ENCODE measurements at regions of chr6 and their contacts with region 1.

Region 1: DNA sequence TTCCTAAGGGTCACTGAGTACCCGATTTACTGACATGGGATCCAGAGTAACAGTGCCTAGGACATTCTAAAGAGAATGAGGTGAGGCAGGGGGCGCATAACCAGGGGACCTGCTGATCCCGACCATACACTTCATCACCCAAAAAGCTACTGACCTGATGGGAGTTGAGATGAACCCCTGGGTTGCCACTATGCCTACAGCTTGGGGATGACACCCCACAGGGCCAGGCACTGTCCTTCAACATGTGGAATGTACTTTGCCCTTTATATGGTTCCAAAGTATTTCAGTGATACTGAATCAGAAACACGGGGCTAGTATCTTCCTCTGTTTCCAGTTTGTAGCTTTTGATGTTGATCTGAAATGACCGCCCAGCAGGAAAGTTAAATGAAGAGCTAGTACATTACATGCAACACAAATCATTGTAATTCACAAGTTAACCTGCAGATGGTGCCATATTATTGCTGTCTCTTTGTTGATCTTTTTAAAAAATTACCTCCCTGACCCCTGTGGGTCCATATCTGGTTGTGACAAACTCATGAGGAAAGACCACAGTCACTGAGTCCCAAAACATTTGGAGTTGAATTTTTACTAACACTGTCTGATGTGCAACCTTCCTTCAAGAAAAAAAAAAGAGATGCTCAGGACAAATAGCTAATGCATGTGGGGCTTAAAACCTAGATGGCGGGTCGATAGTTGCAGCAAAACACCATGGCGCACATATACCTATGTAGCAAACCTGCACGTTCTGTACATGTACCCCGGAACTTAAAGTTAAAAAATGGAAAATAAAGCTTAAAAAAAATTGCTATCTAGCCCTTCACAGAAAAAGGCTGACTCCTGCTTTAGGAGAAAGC is 42.7 kb upstream of the GCNT2 start:
- DNase-seq: peak in 1 of 3 donors; percentile 32
- ATAC-seq: no peak
- H3K4me3 ChIP-seq: no peak overlapping the region
- H3K4me1 ChIP-seq: no peaks in the 10 kb centered on the region
- CTCF ChIP-seq: no peak

Region 2: DNA sequence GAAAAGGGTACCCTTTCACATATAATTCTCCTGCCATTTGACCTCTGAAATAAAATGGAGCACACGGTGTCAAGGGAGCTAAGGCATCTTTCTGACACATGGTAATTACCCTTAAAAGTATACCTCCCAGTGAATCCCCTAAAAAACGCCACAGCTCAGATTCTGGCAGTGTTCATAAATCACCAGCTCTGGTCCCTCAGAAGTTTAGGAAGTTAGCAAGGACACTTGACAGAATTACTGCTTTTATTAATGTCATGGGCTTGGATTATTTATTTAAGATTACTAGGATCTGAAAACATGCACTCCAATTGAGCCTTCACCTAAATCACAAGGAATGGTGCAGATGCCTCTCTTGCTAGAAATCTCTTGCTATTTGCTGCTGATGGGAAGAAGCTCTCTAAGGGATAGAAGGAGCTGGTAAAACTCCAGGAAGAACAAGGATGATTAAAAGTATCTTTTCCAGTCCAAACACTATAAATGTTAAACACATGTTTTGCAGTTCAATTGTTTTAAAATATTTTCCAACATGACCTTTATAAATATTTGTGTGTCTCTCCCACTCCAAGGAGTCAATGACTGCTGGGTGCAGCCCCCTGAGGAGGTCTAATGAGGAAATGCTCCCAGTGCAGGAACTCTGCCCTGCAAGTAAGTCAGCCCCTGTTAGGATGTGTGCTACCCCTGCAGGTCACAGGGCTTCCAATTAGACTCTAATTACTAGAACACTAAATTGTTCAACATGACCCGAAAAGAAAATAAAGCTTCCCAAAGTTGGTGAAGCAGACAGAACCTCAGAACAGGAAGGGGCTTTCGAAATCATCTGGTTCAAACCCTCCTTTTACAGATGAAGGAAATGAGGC is 293.8 kb before region 1 on chr6:
- intact Hi-C with region 1: no loop called
- DNase-seq: no peak
- ATAC-seq: no peak
- H3K4me3 ChIP-seq: no peak overlapping the region
- H3K4me1 ChIP-seq: no peaks in the 10 kb centered on the region
- CTCF ChIP-seq: no peak

Region 3: DNA sequence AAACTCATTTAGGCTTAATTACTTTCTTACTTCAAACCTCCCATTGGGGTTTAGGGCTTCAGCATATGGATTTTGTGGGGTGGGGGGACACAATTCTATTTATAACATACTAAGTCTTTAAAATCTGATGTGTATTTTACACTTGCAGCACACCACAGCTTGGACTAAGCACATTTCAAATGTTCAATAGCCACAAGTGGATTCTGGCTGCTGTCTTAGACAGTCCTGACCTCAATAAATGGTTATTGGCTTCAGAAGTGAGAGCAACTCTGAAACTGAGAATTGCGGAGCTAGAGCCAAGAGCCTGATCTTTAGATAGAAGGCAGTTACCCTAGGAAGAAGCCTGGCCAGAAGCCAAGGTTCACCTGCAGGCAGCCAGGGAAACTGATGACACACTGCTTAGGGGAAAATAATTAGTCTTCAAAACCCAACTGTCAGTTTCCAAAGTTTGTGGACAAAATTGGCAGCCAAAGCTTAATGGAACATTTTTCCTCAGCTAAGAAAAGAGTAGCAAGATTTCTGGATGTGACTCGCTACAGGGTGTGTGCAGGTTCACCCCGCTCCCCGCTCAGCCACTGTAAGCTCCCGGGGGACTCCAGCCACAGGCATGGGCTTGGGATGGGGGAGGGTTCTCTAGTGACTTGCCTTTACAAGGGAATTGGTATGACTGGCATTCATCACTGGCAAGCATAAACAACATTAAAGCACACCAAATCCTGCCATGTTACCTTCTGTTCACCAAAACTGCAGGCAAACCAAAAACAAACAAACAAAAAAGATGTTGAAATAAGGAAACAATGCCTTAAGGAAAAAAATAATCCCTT is 283.4 kb before region 1 on chr6:
- intact Hi-C with region 1: no loop called
- DNase-seq: no peak
- ATAC-seq: no peak
- H3K4me3 ChIP-seq: no peak overlapping the region
- H3K4me1 ChIP-seq: no peaks in the 10 kb centered on the region
- CTCF ChIP-seq: no peak

Region 4: GRCh38 chr6:10310826-10311225 is 167.6 kb before region 1 on chr6:
- intact Hi-C with region 1: no loop called
- DNase-seq: no peak
- ATAC-seq: peak; percentile 36
- H3K4me3 ChIP-seq: no peak overlapping the region
- H3K4me1 ChIP-seq: no peaks in the 10 kb centered on the region
- CTCF ChIP-seq: no peak

Region 5: DNA sequence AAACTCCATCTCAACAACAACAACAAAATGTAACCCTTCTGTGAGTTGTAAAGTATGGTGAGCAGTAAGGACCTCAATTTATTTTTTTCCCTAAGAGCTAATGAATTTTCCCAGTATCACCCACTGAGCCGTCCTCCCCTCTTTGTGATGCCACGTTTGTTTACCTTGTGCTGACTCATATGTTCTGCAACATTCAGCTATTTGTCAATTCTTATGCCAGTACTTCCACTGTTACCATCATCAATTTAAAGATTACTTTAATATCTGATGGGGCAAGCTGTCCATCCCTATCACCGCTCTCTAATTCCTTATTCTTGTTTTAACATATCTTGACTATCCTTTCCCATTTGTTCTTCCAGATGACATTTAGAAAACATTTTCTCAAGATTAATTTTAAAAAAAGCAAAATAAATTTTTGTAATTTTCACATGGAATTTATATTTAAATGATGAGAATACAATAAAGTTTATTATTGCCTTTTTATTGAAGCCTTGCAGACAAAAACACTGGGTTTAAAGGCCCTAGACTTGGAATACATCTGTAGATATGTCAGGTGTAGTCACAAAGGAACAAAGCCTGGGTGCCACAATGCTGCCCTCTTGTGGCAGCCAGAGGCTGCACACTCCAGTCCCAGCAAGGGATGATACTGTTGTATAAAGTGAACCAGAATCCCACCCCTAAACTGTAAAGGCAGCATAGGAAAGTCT is 322.6 kb after region 1 on chr6:
- intact Hi-C with region 1: loop called (anchors 10 kb)
- DNase-seq: peak in 2 of 3 donors; percentile 67 to 69
- ATAC-seq: peak; percentile 95
- H3K4me3 ChIP-seq: no peak overlapping the region
- H3K4me1 ChIP-seq: no peaks in the 10 kb centered on the region
- CTCF ChIP-seq: peak; percentile 95

Measured in mucosa of descending colon (tissue), 3 donors.